HEK293T (cell line): ENCODE measurements at regions of chr17 and their contacts with region 1.

Region 1: GRCh38 chr17:927611-928461 is 51.7 kb downstream of the NXN start:
- DNase-seq: no peak

Region 2: DNA sequence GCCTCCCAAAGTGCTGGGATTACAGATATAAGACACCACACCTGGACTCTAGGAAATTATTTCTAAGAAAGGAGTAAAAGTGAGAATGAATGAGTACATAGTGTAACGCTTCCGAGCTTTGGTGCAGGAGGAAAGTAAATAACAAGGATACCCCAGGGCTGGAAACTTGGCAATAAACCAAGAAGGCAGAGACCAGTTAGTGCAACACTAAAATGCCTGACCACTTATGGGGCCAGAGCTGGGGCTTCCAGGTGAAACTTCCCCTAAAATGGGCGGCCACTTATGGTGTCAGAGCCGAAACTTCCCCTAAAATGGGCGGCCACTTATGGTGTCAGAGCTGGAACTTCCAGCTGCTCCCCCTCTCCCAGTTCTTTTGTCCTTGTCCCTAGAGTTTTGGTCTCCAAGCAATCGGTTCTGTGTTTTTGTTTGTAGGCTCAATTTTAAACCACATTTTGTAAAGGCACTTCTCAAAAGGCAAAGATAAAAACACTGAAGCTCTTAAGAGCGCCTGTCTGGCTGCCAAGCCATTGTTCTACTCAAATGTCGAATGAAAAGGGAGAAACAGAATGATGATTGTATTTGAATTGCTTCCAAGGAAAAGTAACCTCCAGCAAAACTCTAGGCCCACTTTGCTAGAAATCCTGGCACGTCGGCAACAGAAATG is 12.2 kb before region 1 on chr17:
- CTCF ChIA-PET with region 1: interaction called, 12 read pairs
- POLR2A ChIA-PET with region 1: no interaction called
- DNase-seq: no peak